Panc1 (cell line): ENCODE measurements at regions of chr2 and their contacts with region 1.

Region 1: DNA sequence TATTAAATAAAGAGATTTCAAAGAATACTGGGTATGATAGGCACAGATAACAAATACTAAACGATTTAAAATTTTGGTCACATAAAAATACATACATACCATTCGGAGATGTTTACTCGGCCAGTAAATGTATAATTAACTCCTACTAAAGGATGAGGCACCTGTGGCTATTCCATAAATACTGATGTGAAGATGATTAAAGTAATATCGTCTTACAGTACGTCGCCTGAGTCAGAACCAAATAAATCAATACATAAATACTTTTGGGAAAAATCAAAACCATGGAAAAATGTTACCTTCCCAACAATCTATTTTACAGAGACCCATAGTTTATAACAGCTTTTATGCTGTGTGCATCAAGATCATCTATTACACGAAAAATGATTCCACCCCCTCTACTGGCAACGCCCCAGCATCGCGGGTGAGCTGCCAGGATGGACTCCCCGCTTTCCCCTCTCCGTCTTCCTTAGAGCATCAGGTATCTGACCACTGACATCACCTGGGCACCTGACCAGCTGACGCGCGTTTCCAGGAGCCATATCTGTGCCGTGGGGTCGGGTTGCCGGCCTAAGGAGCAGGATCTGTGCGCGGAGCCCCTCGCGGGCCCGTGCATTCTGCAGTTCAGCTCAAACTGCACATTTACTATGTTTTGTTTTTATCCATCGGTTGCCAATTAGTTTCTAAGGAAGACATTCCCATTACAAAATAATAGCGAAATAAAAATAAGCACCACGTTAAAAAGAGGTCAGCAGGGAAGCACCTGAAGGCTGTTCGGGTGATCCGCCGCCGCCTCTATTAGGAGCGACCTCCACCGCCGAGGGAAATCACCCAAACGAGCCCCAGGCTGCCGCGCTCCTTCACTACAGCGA is 901 bp downstream of the ICA1L start:
- DNase-seq: peak; percentile 55
- ATAC-seq: peak; percentile 89
- H3K4me3 ChIP-seq: peak overlapping the region; percentile 55 to 82
- H3K27ac ChIP-seq: peak overlapping the region; percentile 81
- H3K4me1 ChIP-seq: peaks cover 5% of the 10 kb centered on the region; the same call in 1 of the 2 replicates
- H3K27me3 ChIP-seq: no peaks in the 10 kb centered on the region
- CTCF ChIP-seq: peak; percentile 73

Region 2: DNA sequence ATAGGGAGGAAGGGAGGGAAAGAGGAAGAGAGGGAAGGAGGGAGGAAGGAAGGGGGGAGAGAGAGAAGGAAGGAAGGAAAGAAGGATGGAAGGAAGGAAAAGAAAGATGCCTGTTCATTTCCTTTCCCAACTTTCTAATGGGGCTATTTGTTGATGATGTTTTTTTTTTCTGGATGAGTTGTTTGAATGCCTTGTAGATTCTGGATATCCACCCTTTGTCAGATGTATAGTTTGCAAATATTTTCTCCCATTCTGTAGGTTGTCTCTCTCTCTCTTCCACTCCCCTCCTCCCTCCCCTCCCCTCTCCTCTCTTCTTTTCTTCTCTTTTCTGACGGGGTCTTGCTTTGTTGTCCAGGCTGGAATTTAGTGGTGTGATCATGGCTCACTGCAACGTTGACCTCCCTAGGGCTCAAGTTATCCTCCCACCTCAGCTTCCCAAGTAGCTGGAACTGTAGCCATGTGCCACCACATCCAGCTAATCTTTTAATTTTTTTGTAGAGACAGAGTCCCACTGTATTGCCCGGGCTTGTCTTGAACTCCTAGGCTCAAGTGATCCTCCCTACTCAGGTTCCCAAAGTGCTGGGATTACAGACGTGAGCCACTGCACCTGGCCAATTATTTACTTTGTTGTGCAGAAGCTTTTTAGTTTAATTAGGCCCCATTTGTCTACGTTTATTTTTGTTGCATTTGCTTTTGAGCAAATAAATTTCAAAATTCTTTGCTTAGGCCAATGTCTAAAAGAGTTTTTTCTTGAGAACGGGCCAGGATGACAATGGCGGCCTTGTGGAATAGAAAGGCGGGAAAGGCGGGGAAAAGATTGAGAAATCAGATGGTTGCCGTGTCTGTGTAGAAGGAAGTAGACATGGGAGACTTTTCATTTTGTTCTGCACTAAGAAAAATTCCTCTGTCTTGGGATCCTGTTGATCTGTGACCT is 293.1 kb before region 1 on chr2:
- CTCF ChIA-PET with region 1: interaction called, 4 read pairs
- POLR2A ChIA-PET with region 1: no interaction called
- in situ Hi-C with region 1: no loop called
- intact Hi-C with region 1: loop called (anchors 10 kb)
- DNase-seq: no peak
- ATAC-seq: no peak
- H3K4me3 ChIP-seq: no peak overlapping the region
- H3K27ac ChIP-seq: no peak overlapping the region
- H3K4me1 ChIP-seq: no peaks in the 10 kb centered on the region
- H3K27me3 ChIP-seq: no peaks in the 10 kb centered on the region
- CTCF ChIP-seq: no peak

Region 3: DNA sequence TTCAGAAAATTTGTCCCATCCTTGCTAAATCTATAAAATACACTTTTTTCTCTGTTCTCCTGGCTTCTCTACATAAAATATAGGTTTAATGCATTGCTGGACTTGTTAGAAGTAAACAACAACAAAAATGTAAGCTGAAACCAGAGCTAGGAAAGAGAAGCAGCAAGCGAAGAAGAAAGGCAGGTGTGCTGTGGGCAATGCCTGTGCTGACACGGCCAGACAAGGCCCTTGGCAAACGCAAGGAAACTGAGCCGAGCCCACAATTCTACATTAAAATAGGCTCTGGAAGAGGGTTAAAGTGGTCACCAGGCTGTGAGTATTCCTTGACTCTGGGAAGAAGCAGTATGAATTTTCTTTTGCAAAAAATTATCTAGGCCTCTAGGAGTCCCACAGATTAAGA is 69.1 kb before region 1 on chr2:
- CTCF ChIA-PET with region 1: no interaction called
- POLR2A ChIA-PET with region 1: no interaction called
- in situ Hi-C with region 1: no loop called
- intact Hi-C with region 1: no loop called
- DNase-seq: no peak
- ATAC-seq: no peak
- H3K4me3 ChIP-seq: no peak overlapping the region
- H3K27ac ChIP-seq: no peak overlapping the region
- H3K4me1 ChIP-seq: no peaks in the 10 kb centered on the region
- H3K27me3 ChIP-seq: no peaks in the 10 kb centered on the region
- CTCF ChIP-seq: no peak

Region 4: DNA sequence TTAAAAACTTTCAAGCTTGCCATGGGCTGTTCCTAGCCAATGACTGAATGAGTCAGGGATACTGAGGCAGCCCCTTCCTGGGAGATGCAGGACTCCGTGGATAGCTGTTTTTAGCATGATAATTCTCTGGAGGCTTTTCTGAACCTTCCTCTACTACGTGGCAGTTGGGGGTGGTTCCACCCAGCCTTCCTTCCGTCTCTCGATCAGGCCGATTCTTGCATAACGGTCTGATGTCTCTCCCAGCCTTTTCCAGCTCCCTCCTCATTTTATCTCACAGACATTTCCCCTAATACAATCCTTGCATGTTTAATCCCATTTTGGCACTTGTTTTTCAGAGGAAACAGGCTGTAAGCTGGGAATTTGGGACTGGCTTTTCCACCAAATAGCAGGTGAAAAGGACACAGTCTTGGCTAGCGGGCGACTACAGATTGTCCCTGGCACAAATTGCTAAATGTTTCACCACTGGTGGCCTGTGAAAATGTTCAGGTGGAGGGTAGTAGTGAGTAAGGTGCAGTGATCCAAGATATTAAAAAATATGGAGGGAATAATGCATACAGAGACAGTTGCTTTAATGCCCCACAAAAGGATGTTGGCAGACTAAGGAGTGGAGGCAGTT is 975.9 kb after region 1 on chr2:
- CTCF ChIA-PET with region 1: interaction called, 10 read pairs
- POLR2A ChIA-PET with region 1: no interaction called
- in situ Hi-C with region 1: no loop called
- intact Hi-C with region 1: no loop called
- DNase-seq: no peak
- ATAC-seq: no peak
- H3K4me3 ChIP-seq: no peak overlapping the region
- H3K27ac ChIP-seq: no peak overlapping the region
- H3K4me1 ChIP-seq: no peaks in the 10 kb centered on the region
- H3K27me3 ChIP-seq: peaks cover 13% of the 10 kb centered on the region; the same call in 1 of the 2 replicates
- CTCF ChIP-seq: no peak